Right ventricle myocardium superior (tissue), 1 donor: ENCODE measurements at regions of chr9 and their contacts with region 1.

Region 1: GRCh38 chr9:32579706-32580331 is 6.9 kb upstream of the NDUFB6 start:
- DNase-seq: peak; percentile 79
- ATAC-seq: peak; percentile 68

Region 2: GRCh38 chr9:32603914-32604741 is 24.3 kb after region 1 on chr9:
- intact Hi-C with region 1: no loop called
- DNase-seq: no peak
- ATAC-seq: no peak

Region 3: GRCh38 chr9:32965999-32966722 is 386.3 kb after region 1 on chr9:
- intact Hi-C with region 1: loop called (anchors 2 kb)
- DNase-seq: no peak
- ATAC-seq: no peak